Left cardiac atrium (tissue), 4 donors: ENCODE measurements at regions of chr13 and their contacts with region 1.

Region 1: GRCh38 chr13:109243311-109243951 is 543.0 kb downstream of the IRS2 start:
- DNase-seq: peak; percentile 29
- ATAC-seq: peak; percentile 55 to 87

Region 2: DNA sequence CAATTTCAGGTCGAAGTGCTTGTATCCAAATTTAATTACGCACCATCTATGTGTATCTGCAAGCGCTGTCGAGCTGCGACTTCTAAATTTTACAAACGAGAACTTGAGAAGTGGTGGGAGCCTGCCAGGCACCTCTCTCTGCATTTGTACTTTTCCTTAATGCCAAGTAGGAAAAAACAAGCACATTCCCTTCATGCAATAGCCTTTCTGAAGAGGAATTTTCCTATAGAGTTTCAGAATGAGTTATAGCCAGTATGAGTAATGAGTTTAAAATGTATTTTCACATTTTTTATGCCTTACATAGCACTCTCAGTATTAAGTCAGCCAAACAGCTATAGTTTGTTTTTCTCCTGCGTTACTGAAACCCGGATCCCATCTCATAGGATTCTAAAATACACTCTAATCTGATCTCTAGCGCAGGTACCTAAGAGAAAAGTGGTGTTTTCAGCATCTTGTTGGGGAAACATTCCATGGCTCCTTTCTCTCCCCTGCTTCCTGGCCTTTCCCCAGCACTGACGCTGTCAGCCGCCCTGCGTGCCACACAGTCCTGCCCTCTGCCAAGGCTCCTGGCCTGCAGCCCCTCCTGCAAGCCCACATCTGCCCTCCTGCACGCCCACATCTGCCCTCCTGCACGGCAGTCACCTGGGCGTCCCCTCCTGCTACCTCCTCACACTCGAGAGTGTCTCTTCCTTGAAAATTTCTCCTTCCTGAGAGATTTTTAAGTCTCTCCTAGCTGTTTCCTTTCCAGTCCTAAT is 87.1 kb before region 1 on chr13:
- intact Hi-C with region 1: no loop called
- DNase-seq: no peak
- ATAC-seq: peak; percentile 46 to 72

Region 3: DNA sequence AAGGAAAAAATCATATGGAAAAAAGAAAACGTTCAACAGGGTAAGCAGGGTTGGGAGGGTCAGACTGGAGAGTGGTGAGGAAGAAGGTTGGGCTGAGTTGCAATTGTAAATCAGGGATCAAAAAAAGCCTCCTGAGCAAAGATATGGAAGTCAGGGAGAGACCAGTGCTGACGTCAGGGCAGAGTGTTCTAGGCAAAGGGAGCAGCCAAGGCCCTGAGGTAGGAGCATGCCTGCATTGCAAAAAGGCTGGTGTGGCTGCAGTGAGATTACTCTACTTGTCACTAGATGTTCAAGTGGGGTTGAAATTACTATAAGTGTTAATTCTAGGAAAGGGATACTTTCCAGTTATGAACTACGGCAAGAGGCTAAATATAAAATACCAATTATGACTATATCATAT is 52.0 kb before region 1 on chr13:
- intact Hi-C with region 1: loop called in 1 of 2 experiments (anchors 5 kb)
- DNase-seq: peak; percentile 58
- ATAC-seq: peak in 1 of 2 donors; percentile 89

Region 4: DNA sequence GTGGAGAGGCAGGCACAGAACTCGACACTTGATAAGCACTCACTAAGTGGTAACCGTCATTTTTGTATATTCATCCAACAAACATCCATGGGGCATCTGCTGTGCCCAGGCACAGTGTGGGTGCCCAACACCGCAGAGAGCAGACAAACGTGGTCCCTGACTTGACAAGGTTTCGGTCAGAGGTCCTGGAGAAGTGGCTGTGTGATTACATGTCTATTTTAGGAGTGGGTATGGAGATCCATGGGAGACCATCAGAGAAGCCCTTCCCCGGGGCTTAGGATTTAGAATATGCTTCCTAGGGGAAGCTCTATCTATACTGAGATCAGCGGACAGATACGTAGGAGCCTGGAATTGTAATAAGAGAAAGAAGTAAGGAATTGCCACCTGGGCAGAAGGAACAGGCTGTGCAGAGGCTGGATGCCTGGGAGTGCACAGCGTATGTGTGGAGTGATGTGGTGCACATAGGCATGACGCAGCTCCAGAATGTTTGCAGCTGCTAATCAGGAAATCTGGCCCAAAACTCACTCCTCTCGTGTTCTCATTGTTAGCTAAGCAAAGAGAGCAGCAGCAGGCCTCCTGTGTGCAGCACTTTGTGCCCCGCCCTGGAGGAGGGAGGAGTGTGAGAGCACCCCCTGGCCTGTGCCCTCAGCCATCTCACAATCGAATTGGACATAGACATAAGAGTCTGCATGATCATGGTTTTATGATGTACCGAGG is 565.9 kb after region 1 on chr13:
- intact Hi-C with region 1: no loop called
- DNase-seq: no peak
- ATAC-seq: no peak